Activated T-helper 2 cell treated with anti-CD3 and anti-CD28 coated beads, Interferon-gamma antibody, Interleukin-2, Interleukin-4, amounts not matched to agents 10 μg/mL and 5 μg/mL and 100 μg/mL, durations not matched to agents 14 hours and 24 hours and 36 hours (primary cell): ENCODE measurements at regions of chr7 and their contacts with region 1.

Region 1: GRCh38 chr7:130419658-130420057 is 21.2 kb downstream of the CEP41 start:
- DNase-seq: no peak
- H3K4me3 Mint-ChIP-seq: no peak overlapping the region
- H3K27ac Mint-ChIP-seq: peak overlapping the region; percentile 63
- H3K4me1 Mint-ChIP-seq: peaks cover 61% of the 10 kb centered on the region
- H3K27me3 Mint-ChIP-seq: no peaks in the 10 kb centered on the region

Region 2: DNA sequence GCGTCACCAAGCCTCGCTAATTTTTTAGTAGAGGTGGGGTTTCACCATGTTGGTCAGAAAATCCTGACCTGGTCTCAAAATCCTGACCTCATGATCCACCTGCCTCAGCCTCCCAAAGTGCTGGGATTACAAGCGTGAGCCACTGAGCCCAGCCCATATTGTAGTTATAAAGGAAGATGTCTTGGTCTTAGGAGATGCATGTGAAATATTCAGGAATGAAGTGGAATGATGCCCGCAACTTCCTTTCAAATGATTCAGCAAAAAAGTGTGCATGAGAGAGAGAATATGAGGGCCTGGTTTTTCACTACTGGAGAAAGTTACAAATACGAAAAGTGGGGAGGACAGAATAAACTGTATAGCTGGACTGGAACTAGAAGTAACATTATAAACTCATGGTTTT is 230.3 kb before region 1 on chr7:
- intact Hi-C with region 1: no loop called
- DNase-seq: no peak
- H3K4me3 Mint-ChIP-seq: no peak overlapping the region
- H3K27ac Mint-ChIP-seq: no peak overlapping the region
- H3K4me1 Mint-ChIP-seq: peaks cover 4% of the 10 kb centered on the region
- H3K27me3 Mint-ChIP-seq: no peaks in the 10 kb centered on the region

Region 3: GRCh38 chr7:130277763-130278643 is 141.7 kb before region 1 on chr7:
- intact Hi-C with region 1: loop called (anchors 5 kb)
- DNase-seq: no peak
- H3K4me3 Mint-ChIP-seq: no peak overlapping the region
- H3K27ac Mint-ChIP-seq: peak overlapping the region; percentile 63
- H3K4me1 Mint-ChIP-seq: peaks cover 21% of the 10 kb centered on the region
- H3K27me3 Mint-ChIP-seq: peaks cover 3% of the 10 kb centered on the region

Region 4: DNA sequence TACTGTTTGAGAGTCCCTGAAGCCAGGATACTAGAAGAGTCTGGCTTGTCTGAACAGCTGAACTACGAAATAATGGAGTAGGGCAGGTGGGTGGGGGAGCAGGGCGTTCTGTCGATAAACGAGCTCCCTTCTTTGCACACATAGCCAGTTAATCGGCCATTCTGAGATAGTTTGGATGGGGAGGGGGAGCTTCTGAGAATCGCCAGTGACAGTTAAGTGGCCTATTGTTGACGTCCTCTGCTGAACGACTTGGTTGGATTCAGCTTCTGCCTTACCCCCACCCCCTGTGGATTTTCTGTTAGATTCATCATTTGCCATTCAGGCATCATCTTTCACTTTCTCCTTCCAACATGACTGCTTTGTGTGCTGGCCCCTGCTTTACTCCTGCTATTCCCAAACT is 74.5 kb before region 1 on chr7:
- intact Hi-C with region 1: no loop called
- DNase-seq: no peak
- H3K4me3 Mint-ChIP-seq: no peak overlapping the region
- H3K27ac Mint-ChIP-seq: no peak overlapping the region
- H3K4me1 Mint-ChIP-seq: peaks cover 3% of the 10 kb centered on the region
- H3K27me3 Mint-ChIP-seq: peaks cover 6% of the 10 kb centered on the region

Region 5: GRCh38 chr7:130363026-130363798 is 56.4 kb before region 1 on chr7:
- intact Hi-C with region 1: loop called (anchors 5 kb)
- DNase-seq: no peak
- H3K4me3 Mint-ChIP-seq: no peak overlapping the region
- H3K27ac Mint-ChIP-seq: peak overlapping the region; percentile 80
- H3K4me1 Mint-ChIP-seq: peaks cover 16% of the 10 kb centered on the region
- H3K27me3 Mint-ChIP-seq: no peaks in the 10 kb centered on the region

Region 6: GRCh38 chr7:130400120-130400591 is 19.5 kb before region 1 on chr7:
- intact Hi-C with region 1: no loop called
- DNase-seq: no peak
- H3K4me3 Mint-ChIP-seq: no peak overlapping the region
- H3K27ac Mint-ChIP-seq: no peak overlapping the region
- H3K4me1 Mint-ChIP-seq: peaks cover 12% of the 10 kb centered on the region
- H3K27me3 Mint-ChIP-seq: no peaks in the 10 kb centered on the region

Region 7: GRCh38 chr7:130440527-130441365 is 21.1 kb after region 1 on chr7 and contains the start of gene CEP41:
- intact Hi-C with region 1: loop called (anchors 2 kb)
- DNase-seq: peak; percentile 91
- H3K4me3 Mint-ChIP-seq: peak within 1 kb of the TSS; percentile 96
- H3K27ac Mint-ChIP-seq: peak within 1 kb of the TSS; percentile 97
- H3K4me1 Mint-ChIP-seq: peaks cover 46% of the 10 kb centered on the region
- H3K27me3 Mint-ChIP-seq: no peaks in the 10 kb centered on the region
- total RNA-seq, gene CEP41: 15.9 and 21.2 TPM in 2 replicates

Region 8: GRCh38 chr7:130446259-130446658 is 26.6 kb after region 1 on chr7:
- intact Hi-C with region 1: loop called (anchors 1 kb)
- DNase-seq: no peak
- H3K4me3 Mint-ChIP-seq: no peak overlapping the region
- H3K27ac Mint-ChIP-seq: peak overlapping the region; percentile 35
- H3K4me1 Mint-ChIP-seq: peaks cover 38% of the 10 kb centered on the region
- H3K27me3 Mint-ChIP-seq: no peaks in the 10 kb centered on the region

Region 9: GRCh38 chr7:130476297-130477150 is 56.9 kb after region 1 on chr7:
- intact Hi-C with region 1: no loop called
- DNase-seq: no peak
- H3K4me3 Mint-ChIP-seq: no peak overlapping the region
- H3K27ac Mint-ChIP-seq: no peak overlapping the region
- H3K4me1 Mint-ChIP-seq: no peaks in the 10 kb centered on the region
- H3K27me3 Mint-ChIP-seq: no peaks in the 10 kb centered on the region